ENCODE measurements at regions of chr1 and their contacts with region 1.

Region 1: DNA sequence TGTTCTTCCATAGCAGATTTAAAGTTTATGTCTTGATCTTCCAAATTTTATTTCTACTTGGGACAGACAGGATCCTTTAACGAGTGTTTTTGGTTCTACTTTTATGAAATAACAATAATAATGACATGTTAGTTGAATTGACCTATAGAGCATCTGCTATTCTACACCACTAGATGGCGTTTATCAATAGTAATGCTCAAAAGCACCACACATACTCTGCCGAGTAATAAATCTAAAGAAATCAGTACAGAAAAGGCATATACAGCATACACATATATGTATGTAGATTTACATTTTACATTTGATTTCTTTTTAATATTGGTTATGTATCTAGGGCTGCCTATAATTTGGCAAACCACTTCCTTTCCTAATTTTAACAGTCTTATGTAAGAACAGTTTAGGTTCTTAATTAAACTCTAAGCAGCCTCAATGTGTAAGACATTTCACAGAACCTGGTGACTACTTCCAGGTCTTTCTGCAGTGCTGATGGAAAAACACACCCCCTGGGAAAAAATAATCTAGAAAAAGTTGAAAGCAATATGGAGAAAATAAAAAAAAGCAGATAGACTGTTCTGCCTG is 5.9 kb upstream of the SIPA1L2 start:
- DNase-seq: peak in 3 of 14 experiments; percentile 56 to 65 (median 63)
- ATAC-seq: peak; percentile 81
- H3K4me3 ChIP-seq: no peak overlapping the region
- H3K4me3 Mint-ChIP-seq: peak overlapping the region; percentile 14
- H3K27ac ChIP-seq: no peak overlapping the region
- H3K27ac Mint-ChIP-seq: no peak overlapping the region
- H3K4me1 ChIP-seq: peaks cover 5% of the 10 kb centered on the region
- H3K4me1 Mint-ChIP-seq: peaks cover 4% of the 10 kb centered on the region
- H3K27me3 ChIP-seq: peaks cover 5% of the 10 kb centered on the region in 2 experiments
- H3K27me3 Mint-ChIP-seq: peaks cover 22% of the 10 kb centered on the region
- CTCF ChIP-seq: peak; percentile 90

Region 2: DNA sequence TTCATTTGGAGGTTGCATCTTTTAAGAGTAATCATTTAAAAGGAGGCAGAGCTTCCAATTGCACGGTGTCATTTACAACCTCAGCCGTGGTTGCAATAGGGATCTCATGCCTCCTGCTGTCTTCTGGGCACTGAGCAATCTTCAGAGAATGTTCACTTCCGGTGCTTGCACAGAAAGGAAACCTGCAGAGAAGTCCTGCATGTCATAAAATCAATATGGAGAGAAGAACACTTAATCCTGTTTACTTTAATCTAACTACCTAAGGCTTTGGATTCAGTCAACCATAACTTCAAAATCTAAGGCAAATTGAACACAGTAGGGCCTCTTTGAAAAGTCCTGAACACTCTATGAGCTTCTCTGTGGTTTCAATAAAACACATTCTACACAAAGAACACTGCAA is 158.1 kb after region 1 on chr1:
- CTCF ChIA-PET with region 1: no interaction called
- POLR2A ChIA-PET with region 1: no interaction called
- intact Hi-C with region 1: loop called (anchors 2 to 5 kb)
- DNase-seq: peak in 6 of 14 experiments; percentile 5 to 46 (median 35)
- ATAC-seq: peak; percentile 76
- H3K4me3 ChIP-seq: no peak overlapping the region
- H3K4me3 Mint-ChIP-seq: no peak overlapping the region
- H3K27ac ChIP-seq: no peak overlapping the region
- H3K27ac Mint-ChIP-seq: peak overlapping the region; percentile 47
- H3K4me1 ChIP-seq: peaks cover 12% of the 10 kb centered on the region
- H3K4me1 Mint-ChIP-seq: peaks cover 23% of the 10 kb centered on the region
- H3K27me3 ChIP-seq: no peaks in the 10 kb centered on the region
- H3K27me3 Mint-ChIP-seq: peaks cover 2% of the 10 kb centered on the region
- CTCF ChIP-seq: peak; percentile 33

Region 3: GRCh38 chr1:232950197-232951176 is 314.6 kb after region 1 on chr1 and contains the start of gene NTPCR:
- CTCF ChIA-PET with region 1: no interaction called
- POLR2A ChIA-PET with region 1: no interaction called
- intact Hi-C with region 1: loop called in 1 of 2 experiments (anchors 5 kb)
- DNase-seq: peak; percentile 86 to 98 (median 94)
- ATAC-seq: peak; percentile 83
- H3K4me3 ChIP-seq: peak within 1 kb of the TSS; percentile 85
- H3K4me3 Mint-ChIP-seq: peak within 1 kb of the TSS; percentile 96
- H3K27ac ChIP-seq: peak within 1 kb of the TSS; percentile 56 to 66
- H3K27ac Mint-ChIP-seq: peak within 1 kb of the TSS; percentile 83
- H3K4me1 ChIP-seq: peaks cover 27% of the 10 kb centered on the region
- H3K4me1 Mint-ChIP-seq: peaks cover 54% of the 10 kb centered on the region
- H3K27me3 ChIP-seq: no peaks in the 10 kb centered on the region
- H3K27me3 Mint-ChIP-seq: no peaks in the 10 kb centered on the region
- CTCF ChIP-seq: no peak
- total RNA-seq, gene NTPCR: 8.5 to 9.3 TPM

Region 4: GRCh38 chr1:233025157-233025915 is 389.5 kb after region 1 on chr1:
- CTCF ChIA-PET with region 1: no interaction called
- POLR2A ChIA-PET with region 1: no interaction called
- intact Hi-C with region 1: loop called in 1 of 2 experiments (anchors 5 kb)
- DNase-seq: peak in 4 of 14 experiments; percentile 10 to 43 (median 27)
- ATAC-seq: no peak
- H3K4me3 ChIP-seq: no peak overlapping the region
- H3K4me3 Mint-ChIP-seq: no peak overlapping the region
- H3K27ac ChIP-seq: no peak overlapping the region
- H3K27ac Mint-ChIP-seq: no peak overlapping the region
- H3K4me1 ChIP-seq: peaks cover 5% of the 10 kb centered on the region
- H3K4me1 Mint-ChIP-seq: no peaks in the 10 kb centered on the region
- H3K27me3 ChIP-seq: no peaks in the 10 kb centered on the region
- H3K27me3 Mint-ChIP-seq: no peaks in the 10 kb centered on the region
- CTCF ChIP-seq: no peak

Region 5: DNA sequence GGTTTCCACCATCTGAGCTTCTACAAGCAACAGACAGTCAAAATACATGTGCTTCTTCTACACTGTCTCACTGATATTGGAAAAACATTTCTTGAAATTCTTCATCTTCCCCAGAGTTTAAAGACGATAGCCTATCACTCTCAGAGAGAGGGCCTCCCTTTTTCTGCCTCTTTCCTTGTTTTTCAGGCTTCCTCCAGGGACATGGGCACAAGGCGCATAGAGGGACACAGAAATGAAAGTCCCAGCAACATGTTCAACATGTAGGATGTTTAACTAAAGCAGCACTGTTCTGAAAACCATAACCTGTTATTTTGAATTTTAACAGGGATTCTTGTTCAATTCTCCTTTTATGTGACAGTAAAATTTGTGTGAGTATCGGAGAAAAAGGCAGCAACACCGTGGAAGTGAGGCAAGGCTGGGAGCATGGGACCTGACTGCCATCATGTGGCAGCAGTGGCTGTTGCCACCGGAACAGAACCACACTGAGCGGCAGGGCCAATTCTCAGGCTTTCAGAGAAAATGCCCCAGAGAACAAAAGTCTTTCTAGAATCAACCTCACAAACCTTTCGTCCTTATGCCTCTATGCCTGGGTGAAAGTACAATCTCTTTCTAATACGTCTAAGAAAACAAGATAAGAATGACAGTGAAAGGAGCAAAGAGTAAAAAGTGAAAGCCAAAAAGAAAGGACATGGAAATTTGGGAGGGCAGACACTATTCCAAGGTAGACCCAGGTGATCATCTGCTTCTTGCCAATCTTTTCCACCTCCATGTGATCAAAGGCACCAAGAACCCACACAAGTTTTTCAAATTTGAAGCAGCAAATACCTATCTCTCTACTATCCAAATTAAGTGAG is 605.2 kb after region 1 on chr1:
- CTCF ChIA-PET with region 1: no interaction called
- POLR2A ChIA-PET with region 1: no interaction called
- intact Hi-C with region 1: loop called (anchors 2 kb)
- DNase-seq: peak in 7 of 14 experiments; percentile 2 to 50 (median 5)
- ATAC-seq: no peak
- H3K4me3 ChIP-seq: no peak overlapping the region
- H3K4me3 Mint-ChIP-seq: no peak overlapping the region
- H3K27ac ChIP-seq: no peak overlapping the region
- H3K27ac Mint-ChIP-seq: no peak overlapping the region
- H3K4me1 ChIP-seq: no peaks in the 10 kb centered on the region
- H3K4me1 Mint-ChIP-seq: no peaks in the 10 kb centered on the region
- H3K27me3 ChIP-seq: no peaks in the 10 kb centered on the region
- H3K27me3 Mint-ChIP-seq: no peaks in the 10 kb centered on the region
- CTCF ChIP-seq: peak; percentile 46